ENCODE measurements at regions of chr6 and their contacts with region 1.

Region 1: GRCh38 chr6:155248008-155249001 is 15.5 kb upstream of the CLDN20 start:
- DNase-seq: peak; percentile 36
- ATAC-seq: peak; percentile 88
- H3K4me3 ChIP-seq: no peak overlapping the region
- H3K27ac ChIP-seq: no peak overlapping the region
- H3K4me1 ChIP-seq: peaks cover 4% of the 10 kb centered on the region; the same call in 1 of the 2 replicates
- H3K27me3 ChIP-seq: no peaks in the 10 kb centered on the region
- CTCF ChIP-seq: peak; percentile 67 to 70 (median 69); a peak in 5 of 6 replicates
- EP300 ChIP-seq: no peak
- POLR2A ChIP-seq: no peak
- RAD21 ChIP-seq: peak; percentile 92

Region 2: DNA sequence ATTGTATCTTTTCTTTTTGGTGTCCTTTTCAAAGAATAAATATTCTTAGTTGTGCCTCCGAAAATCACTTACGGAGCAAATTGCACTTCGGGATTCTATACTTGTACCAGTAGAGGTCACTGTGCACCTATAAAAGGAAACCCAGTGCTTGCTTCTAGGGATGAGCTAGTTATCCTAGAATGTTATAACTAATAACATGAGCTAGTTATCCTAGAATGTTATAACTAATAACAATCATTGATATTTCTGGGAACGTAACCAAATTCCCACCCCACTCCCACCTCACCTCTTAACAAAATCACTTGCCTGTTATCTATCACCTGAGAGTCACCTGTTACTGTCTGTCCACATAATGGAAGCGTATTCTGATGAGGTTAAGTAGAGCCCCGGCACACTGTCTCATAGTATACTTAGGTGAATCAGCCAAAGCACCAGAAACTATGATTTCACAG is 380.1 kb before region 1 on chr6:
- CTCF ChIA-PET with region 1: no interaction called
- POLR2A ChIA-PET with region 1: no interaction called
- RAD21 ChIA-PET with region 1: no interaction called
- SMC1A ChIA-PET with region 1: no interaction called
- in situ Hi-C with region 1: no loop called
- intact Hi-C with region 1: loop called (anchors 10 kb)
- DNase-seq: no peak
- ATAC-seq: no peak
- H3K4me3 ChIP-seq: no peak overlapping the region
- H3K27ac ChIP-seq: no peak overlapping the region
- H3K4me1 ChIP-seq: no peaks in the 10 kb centered on the region
- H3K27me3 ChIP-seq: no peaks in the 10 kb centered on the region
- CTCF ChIP-seq: peak; percentile 32 to 47 (median 45); a peak in 5 of 6 replicates
- EP300 ChIP-seq: no peak
- POLR2A ChIP-seq: no peak
- RAD21 ChIP-seq: peak; percentile 62

Region 3: GRCh38 chr6:154928325-154928922 is 319.9 kb before region 1 on chr6:
- CTCF ChIA-PET with region 1: interaction called, 23 read pairs
- POLR2A ChIA-PET with region 1: no interaction called
- RAD21 ChIA-PET with region 1: interaction called, 24 read pairs
- SMC1A ChIA-PET with region 1: interaction called, 8 read pairs
- in situ Hi-C with region 1: loop called (anchors 5 kb)
- intact Hi-C with region 1: loop called (anchors 1 kb)
- DNase-seq: peak; percentile 12
- ATAC-seq: peak; percentile 94
- H3K4me3 ChIP-seq: no peak overlapping the region
- H3K27ac ChIP-seq: no peak overlapping the region
- H3K4me1 ChIP-seq: 0 out of 2 replicates have a peak, but pooled peaks cover 2% of the 10 kb centered on the region
- H3K27me3 ChIP-seq: no peaks in the 10 kb centered on the region
- CTCF ChIP-seq: peak; percentile 72 to 90 (median 76)
- EP300 ChIP-seq: no peak
- POLR2A ChIP-seq: no peak
- RAD21 ChIP-seq: peak; percentile 98

Region 4: GRCh38 chr6:154995284-154996015 is 252.9 kb before region 1 on chr6 and contains the start of gene TIAM2:
- CTCF ChIA-PET with region 1: no interaction called
- POLR2A ChIA-PET with region 1: no interaction called
- RAD21 ChIA-PET with region 1: no interaction called
- SMC1A ChIA-PET with region 1: no interaction called
- in situ Hi-C with region 1: no loop called
- intact Hi-C with region 1: no loop called
- DNase-seq: no peak
- ATAC-seq: peak; percentile 64
- H3K4me3 ChIP-seq: peak within 1 kb of the TSS; percentile 55; the same call in 1 of the 2 replicates
- H3K27ac ChIP-seq: no peak within 1 kb of the TSS
- H3K4me1 ChIP-seq: no peaks in the 10 kb centered on the region
- H3K27me3 ChIP-seq: peaks cover 5 to 10% of the 10 kb centered on the region in 2 experiments; a peak in 3 of 4 replicates
- CTCF ChIP-seq: no peak
- EP300 ChIP-seq: no peak
- POLR2A ChIP-seq: no peak
- RAD21 ChIP-seq: no peak
- polyA plus RNA-seq, gene TIAM2: 1.1 to 1.4 TPM

Region 5: DNA sequence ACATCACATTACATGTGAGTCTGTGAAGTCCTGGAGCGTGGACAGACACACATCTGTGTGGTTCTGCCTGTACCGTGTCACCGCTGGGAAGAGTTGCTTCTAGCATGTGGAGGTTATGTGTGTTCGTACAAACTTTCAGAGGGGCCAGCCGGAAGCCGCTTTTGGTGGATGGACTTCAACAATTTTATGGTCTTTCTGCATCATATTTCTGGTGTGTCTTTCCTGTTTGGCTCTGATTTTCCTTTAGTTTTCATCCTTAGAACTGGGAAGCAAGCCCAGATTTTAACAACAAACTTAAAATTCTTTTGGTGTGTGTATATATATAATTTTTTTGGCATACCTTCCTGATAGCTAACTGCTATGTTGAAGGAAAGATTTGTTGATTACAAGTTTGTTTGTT is 181.9 kb before region 1 on chr6:
- CTCF ChIA-PET with region 1: no interaction called
- POLR2A ChIA-PET with region 1: no interaction called
- RAD21 ChIA-PET with region 1: no interaction called
- SMC1A ChIA-PET with region 1: no interaction called
- in situ Hi-C with region 1: no loop called
- intact Hi-C with region 1: no loop called
- DNase-seq: no peak
- ATAC-seq: no peak
- H3K4me3 ChIP-seq: no peak overlapping the region
- H3K27ac ChIP-seq: no peak overlapping the region
- H3K4me1 ChIP-seq: no peaks in the 10 kb centered on the region
- H3K27me3 ChIP-seq: no peaks in the 10 kb centered on the region
- CTCF ChIP-seq: no peak
- EP300 ChIP-seq: no peak
- POLR2A ChIP-seq: no peak
- RAD21 ChIP-seq: no peak

Region 6: GRCh38 chr6:155100087-155100486 is 148.2 kb before region 1 on chr6:
- CTCF ChIA-PET with region 1: no interaction called
- POLR2A ChIA-PET with region 1: no interaction called
- RAD21 ChIA-PET with region 1: no interaction called
- SMC1A ChIA-PET with region 1: no interaction called
- in situ Hi-C with region 1: no loop called
- intact Hi-C with region 1: no loop called
- DNase-seq: no peak
- ATAC-seq: no peak
- H3K4me3 ChIP-seq: no peak overlapping the region
- H3K27ac ChIP-seq: no peak overlapping the region
- H3K4me1 ChIP-seq: no peaks in the 10 kb centered on the region
- H3K27me3 ChIP-seq: no peaks in the 10 kb centered on the region
- CTCF ChIP-seq: no peak
- EP300 ChIP-seq: no peak
- POLR2A ChIP-seq: no peak
- RAD21 ChIP-seq: no peak

Region 7: DNA sequence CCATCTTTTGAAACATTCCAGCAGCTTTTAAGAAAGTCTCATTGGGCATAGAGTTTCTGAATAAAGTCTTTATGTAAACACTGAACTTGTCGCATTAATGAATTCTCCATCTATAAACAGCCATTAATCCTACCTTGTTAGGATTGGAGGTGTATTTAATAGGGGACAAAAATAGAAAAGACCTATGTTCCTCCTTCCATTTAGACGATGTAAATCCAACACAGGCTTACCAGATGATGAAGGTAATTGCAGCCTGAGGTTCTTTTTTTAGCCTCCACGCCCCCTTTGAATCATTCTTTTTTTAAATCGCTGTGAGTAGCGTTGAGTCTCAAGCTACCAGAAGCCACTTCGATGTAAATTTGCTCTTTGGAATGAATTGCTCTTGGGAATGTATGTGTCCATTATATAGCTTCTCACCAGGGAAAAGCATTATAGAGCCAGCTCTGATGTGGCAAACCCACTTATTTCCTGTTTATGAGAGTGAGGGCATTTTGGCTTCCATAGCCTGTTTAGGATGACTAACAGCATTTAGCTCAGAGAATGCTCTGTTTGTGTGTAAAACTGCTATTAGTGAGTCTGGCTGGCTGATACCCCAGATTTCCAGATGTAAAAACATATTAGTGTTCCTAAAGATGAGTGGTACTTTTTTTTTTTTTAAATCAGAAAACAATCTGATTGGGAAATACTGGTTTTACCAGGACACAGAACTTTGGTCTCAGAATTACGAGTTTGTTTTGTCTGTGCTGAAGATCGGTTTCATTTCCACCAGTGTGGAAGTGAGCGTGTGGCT is 59.4 kb before region 1 on chr6:
- CTCF ChIA-PET with region 1: interaction called, 5 read pairs
- POLR2A ChIA-PET with region 1: interaction called, 6 read pairs
- RAD21 ChIA-PET with region 1: interaction called, 12 read pairs
- SMC1A ChIA-PET with region 1: interaction called, 8 read pairs
- in situ Hi-C with region 1: no loop called
- intact Hi-C with region 1: no loop called
- DNase-seq: no peak
- ATAC-seq: peak; percentile 11; the same call in 1 of the 3 replicates
- H3K4me3 ChIP-seq: peak overlapping the region; percentile 0; the same call in 1 of the 2 replicates
- H3K27ac ChIP-seq: no peak overlapping the region
- H3K4me1 ChIP-seq: peaks cover 4% of the 10 kb centered on the region; the same call in 1 of the 2 replicates
- H3K27me3 ChIP-seq: no peaks in the 10 kb centered on the region
- CTCF ChIP-seq: no peak
- EP300 ChIP-seq: no peak
- POLR2A ChIP-seq: no peak
- RAD21 ChIP-seq: no peak

Region 8: GRCh38 chr6:155235087-155235486 is 13.2 kb before region 1 on chr6:
- CTCF ChIA-PET with region 1: interaction called, 20 read pairs
- POLR2A ChIA-PET with region 1: no interaction called
- RAD21 ChIA-PET with region 1: interaction called, 5 read pairs
- SMC1A ChIA-PET with region 1: interaction called, 8 read pairs
- in situ Hi-C with region 1: no loop called
- intact Hi-C with region 1: no loop called
- DNase-seq: no peak
- ATAC-seq: no peak
- H3K4me3 ChIP-seq: no peak overlapping the region
- H3K27ac ChIP-seq: no peak overlapping the region
- H3K4me1 ChIP-seq: peaks cover 4% of the 10 kb centered on the region
- H3K27me3 ChIP-seq: no peaks in the 10 kb centered on the region
- CTCF ChIP-seq: no peak
- EP300 ChIP-seq: no peak
- POLR2A ChIP-seq: no peak
- RAD21 ChIP-seq: no peak

Region 9: DNA sequence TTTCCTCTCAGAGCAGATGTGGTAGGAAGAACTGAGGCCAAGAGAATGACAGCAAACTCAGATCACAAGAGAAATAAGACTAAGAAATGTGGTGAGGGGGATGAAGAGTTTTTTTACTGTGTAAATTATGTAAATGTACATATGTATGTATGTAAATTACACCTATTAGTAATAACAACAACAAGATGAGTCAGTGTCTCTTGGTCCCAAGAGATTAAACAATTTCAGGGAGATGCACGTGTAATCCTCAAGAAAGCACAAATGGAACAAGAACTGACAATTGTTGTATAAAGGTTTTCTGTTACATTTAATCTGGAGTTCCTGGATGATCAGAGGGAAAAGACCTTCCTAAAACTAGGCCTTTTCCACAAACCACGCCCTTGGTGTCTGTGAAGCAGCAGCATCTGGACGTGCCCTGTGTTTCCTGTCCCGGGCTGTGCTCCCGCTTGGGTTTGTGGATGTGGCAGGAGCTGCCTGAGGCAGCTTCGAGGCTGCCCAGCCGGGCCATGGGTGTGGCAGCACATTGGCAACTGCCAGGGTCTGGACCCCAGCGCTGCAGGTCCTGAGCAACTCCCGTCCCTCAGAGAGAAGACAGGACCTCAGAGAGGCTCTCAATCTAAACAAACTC is 16.5 kb after region 1 on chr6:
- CTCF ChIA-PET with region 1: interaction called, 7 read pairs
- POLR2A ChIA-PET with region 1: no interaction called
- RAD21 ChIA-PET with region 1: interaction called, 13 read pairs
- SMC1A ChIA-PET with region 1: interaction called, 15 read pairs
- in situ Hi-C with region 1: no loop called
- intact Hi-C with region 1: no loop called
- DNase-seq: no peak
- ATAC-seq: no peak
- H3K4me3 ChIP-seq: no peak overlapping the region
- H3K27ac ChIP-seq: no peak overlapping the region
- H3K4me1 ChIP-seq: peaks cover 17% of the 10 kb centered on the region
- H3K27me3 ChIP-seq: no peaks in the 10 kb centered on the region
- CTCF ChIP-seq: no peak
- EP300 ChIP-seq: no peak
- POLR2A ChIP-seq: no peak
- RAD21 ChIP-seq: no peak

Region 10: DNA sequence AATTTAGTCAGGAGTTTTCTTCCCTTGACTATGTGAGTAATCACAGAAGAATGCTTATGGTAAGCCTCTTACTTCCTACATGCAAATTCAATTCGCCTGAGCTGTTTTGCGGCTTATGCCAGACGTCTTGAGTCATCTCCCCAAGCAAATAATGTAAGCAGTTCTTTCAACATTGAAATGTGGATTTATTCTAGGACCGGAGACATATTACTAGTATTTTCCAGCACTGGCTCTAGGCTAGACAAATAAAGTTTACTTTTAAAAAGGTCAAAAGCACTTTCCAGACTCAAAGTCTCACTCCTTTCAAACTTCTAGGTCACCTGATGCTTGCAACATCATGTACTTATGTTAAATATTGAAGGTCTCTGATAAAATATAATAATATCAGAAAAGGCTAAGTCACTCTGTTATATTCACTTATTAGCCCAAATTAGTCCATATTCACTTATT is 245.4 kb after region 1 on chr6:
- CTCF ChIA-PET with region 1: no interaction called
- POLR2A ChIA-PET with region 1: no interaction called
- RAD21 ChIA-PET with region 1: no interaction called
- SMC1A ChIA-PET with region 1: no interaction called
- in situ Hi-C with region 1: no loop called
- intact Hi-C with region 1: no loop called
- DNase-seq: peak; percentile 56
- ATAC-seq: peak; percentile 96
- H3K4me3 ChIP-seq: no peak overlapping the region
- H3K27ac ChIP-seq: no peak overlapping the region
- H3K4me1 ChIP-seq: peaks cover 5% of the 10 kb centered on the region; the same call in 1 of the 2 replicates
- H3K27me3 ChIP-seq: no peaks in the 10 kb centered on the region
- CTCF ChIP-seq: no peak
- EP300 ChIP-seq: peak in 1 of 2 experiments; percentile 52; a peak in 2 of 4 replicates
- POLR2A ChIP-seq: no peak
- RAD21 ChIP-seq: no peak

Measured in GM12878 (cell line).